MCF 10A (cell line): ENCODE measurements at regions of chr12 and their contacts with region 1.

Region 1: GRCh38 chr12:47870175-47870781 is 34.5 kb downstream of the VDR start:
- DNase-seq: peak; percentile 46
- H3K4me3 Mint-ChIP-seq: no peak overlapping the region
- H3K27ac Mint-ChIP-seq: no peak overlapping the region
- H3K4me1 Mint-ChIP-seq: peaks cover 6% of the 10 kb centered on the region
- H3K27me3 Mint-ChIP-seq: no peaks in the 10 kb centered on the region
- CTCF ChIP-seq: peak; percentile 31

Region 2: GRCh38 chr12:47488888-47489287 is 381.4 kb before region 1 on chr12:
- CTCF ChIA-PET with region 1: no interaction called
- POLR2A ChIA-PET with region 1: no interaction called
- intact Hi-C with region 1: no loop called
- DNase-seq: no peak
- H3K4me3 Mint-ChIP-seq: no peak overlapping the region
- H3K27ac Mint-ChIP-seq: no peak overlapping the region
- H3K4me1 Mint-ChIP-seq: no peaks in the 10 kb centered on the region
- H3K27me3 Mint-ChIP-seq: peaks cover 94% of the 10 kb centered on the region
- CTCF ChIP-seq: no peak

Region 3: GRCh38 chr12:47882781-47883546 is 12.7 kb after region 1 on chr12:
- CTCF ChIA-PET with region 1: interaction called, 10 read pairs
- POLR2A ChIA-PET with region 1: interaction called, 4 read pairs
- intact Hi-C with region 1: no loop called
- DNase-seq: peak; percentile 62
- H3K4me3 Mint-ChIP-seq: no peak overlapping the region
- H3K27ac Mint-ChIP-seq: no peak overlapping the region
- H3K4me1 Mint-ChIP-seq: peaks cover 50% of the 10 kb centered on the region
- H3K27me3 Mint-ChIP-seq: no peaks in the 10 kb centered on the region
- CTCF ChIP-seq: no peak

Region 4: GRCh38 chr12:47896633-47897032 is 26.4 kb after region 1 on chr12:
- CTCF ChIA-PET with region 1: interaction called, 10 read pairs
- POLR2A ChIA-PET with region 1: interaction called, 5 read pairs
- intact Hi-C with region 1: no loop called
- DNase-seq: peak; percentile 97
- H3K4me3 Mint-ChIP-seq: peak overlapping the region; percentile 52
- H3K27ac Mint-ChIP-seq: peak overlapping the region; percentile 70
- H3K4me1 Mint-ChIP-seq: peaks cover 44% of the 10 kb centered on the region
- H3K27me3 Mint-ChIP-seq: no peaks in the 10 kb centered on the region
- CTCF ChIP-seq: no peak